ENCODE measurements at regions of chr10 and their contacts with region 1.

Region 1: GRCh38 chr10:9024210-9024609 is 969.7 kb downstream of the GATA3 start:
- DNase-seq: no peak
- ATAC-seq: peak; percentile 72
- H3K4me3 Mint-ChIP-seq: no peak overlapping the region
- H3K27ac Mint-ChIP-seq: peak overlapping the region; percentile 81
- H3K4me1 Mint-ChIP-seq: peaks cover 47% of the 10 kb centered on the region
- H3K27me3 Mint-ChIP-seq: peaks cover 12% of the 10 kb centered on the region

Region 2: GRCh38 chr10:8059959-8060703 is 964.1 kb before region 1 on chr10:
- CTCF ChIA-PET with region 1: no interaction called
- POLR2A ChIA-PET with region 1: no interaction called
- intact Hi-C with region 1: loop called (anchors 5 to 10 kb)
- DNase-seq: peak; percentile 83
- ATAC-seq: peak; percentile 55
- H3K4me3 Mint-ChIP-seq: peak overlapping the region; percentile 96
- H3K27ac Mint-ChIP-seq: peak overlapping the region; percentile 81
- H3K4me1 Mint-ChIP-seq: peaks cover 77% of the 10 kb centered on the region
- H3K27me3 Mint-ChIP-seq: no peaks in the 10 kb centered on the region

Region 3: GRCh38 chr10:8379906-8380832 is 644.0 kb before region 1 on chr10:
- CTCF ChIA-PET with region 1: no interaction called
- POLR2A ChIA-PET with region 1: no interaction called
- intact Hi-C with region 1: no loop called
- DNase-seq: no peak
- ATAC-seq: no peak
- H3K4me3 Mint-ChIP-seq: no peak overlapping the region
- H3K27ac Mint-ChIP-seq: no peak overlapping the region
- H3K4me1 Mint-ChIP-seq: peaks cover 2% of the 10 kb centered on the region
- H3K27me3 Mint-ChIP-seq: no peaks in the 10 kb centered on the region

Region 4: DNA sequence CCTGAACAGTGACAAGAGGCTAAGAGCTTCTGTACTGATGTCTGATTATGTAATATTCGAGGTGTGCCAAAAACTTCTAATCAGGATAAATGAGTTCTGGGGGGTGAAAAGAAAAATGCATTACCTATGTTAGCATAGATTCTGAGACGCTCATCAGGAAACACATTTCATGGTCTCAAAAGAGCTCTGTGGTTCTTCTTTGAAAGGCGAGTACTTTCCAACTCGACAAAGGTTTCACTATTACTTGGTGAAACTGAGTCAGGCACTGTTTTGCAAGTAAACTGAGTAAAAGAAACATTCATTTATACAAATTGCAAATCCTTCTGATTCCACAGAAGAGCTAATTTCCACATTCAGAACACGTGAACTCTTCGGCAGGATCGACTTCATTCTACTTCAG is 446.5 kb before region 1 on chr10:
- CTCF ChIA-PET with region 1: no interaction called
- POLR2A ChIA-PET with region 1: no interaction called
- intact Hi-C with region 1: loop called in 1 of 2 experiments (anchors 10 kb)
- DNase-seq: peak; percentile 12
- ATAC-seq: peak; percentile 71
- H3K4me3 Mint-ChIP-seq: no peak overlapping the region
- H3K27ac Mint-ChIP-seq: peak overlapping the region; percentile 59
- H3K4me1 Mint-ChIP-seq: peaks cover 36% of the 10 kb centered on the region
- H3K27me3 Mint-ChIP-seq: peaks cover 31% of the 10 kb centered on the region

Region 5: DNA sequence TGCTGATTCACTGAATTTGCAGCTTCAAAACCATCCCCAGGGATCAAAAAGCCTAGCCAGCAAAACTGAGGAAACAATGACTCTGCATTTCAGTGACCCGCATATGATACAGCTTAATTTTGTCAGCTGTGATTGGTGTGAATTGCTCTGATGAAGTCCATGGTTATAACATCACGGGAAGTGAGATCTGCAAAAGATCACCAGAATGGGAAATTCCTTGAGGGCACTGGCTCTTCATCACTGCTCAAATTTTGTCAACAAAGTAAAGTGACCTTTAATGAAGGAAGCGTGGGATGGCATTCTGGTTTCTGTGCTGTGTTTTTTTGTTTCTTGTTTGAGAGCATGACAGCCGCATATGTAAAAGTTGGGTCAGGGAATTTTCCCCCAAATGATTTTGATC is 223.8 kb before region 1 on chr10:
- CTCF ChIA-PET with region 1: no interaction called
- POLR2A ChIA-PET with region 1: no interaction called
- intact Hi-C with region 1: no loop called
- DNase-seq: peak; percentile 9
- ATAC-seq: peak; percentile 53
- H3K4me3 Mint-ChIP-seq: no peak overlapping the region
- H3K27ac Mint-ChIP-seq: no peak overlapping the region
- H3K4me1 Mint-ChIP-seq: peaks cover 11% of the 10 kb centered on the region
- H3K27me3 Mint-ChIP-seq: peaks cover 2% of the 10 kb centered on the region

Region 6: GRCh38 chr10:8998751-8999150 is 25.5 kb before region 1 on chr10:
- CTCF ChIA-PET with region 1: no interaction called
- POLR2A ChIA-PET with region 1: no interaction called
- intact Hi-C with region 1: loop called in 1 of 2 experiments (anchors 5 kb)
- DNase-seq: no peak
- ATAC-seq: no peak
- H3K4me3 Mint-ChIP-seq: no peak overlapping the region
- H3K27ac Mint-ChIP-seq: no peak overlapping the region
- H3K4me1 Mint-ChIP-seq: peaks cover 31% of the 10 kb centered on the region
- H3K27me3 Mint-ChIP-seq: no peaks in the 10 kb centered on the region

Region 7: GRCh38 chr10:9081253-9081652 is 57.0 kb after region 1 on chr10:
- CTCF ChIA-PET with region 1: no interaction called
- POLR2A ChIA-PET with region 1: interaction called, 3 read pairs
- intact Hi-C with region 1: loop called (anchors 2 kb)
- DNase-seq: no peak
- ATAC-seq: no peak
- H3K4me3 Mint-ChIP-seq: no peak overlapping the region
- H3K27ac Mint-ChIP-seq: no peak overlapping the region
- H3K4me1 Mint-ChIP-seq: peaks cover 29% of the 10 kb centered on the region
- H3K27me3 Mint-ChIP-seq: peaks cover 16% of the 10 kb centered on the region